Left colon (tissue), 2 donors: ENCODE measurements at regions of chr4 and their contacts with region 1.

Region 1: DNA sequence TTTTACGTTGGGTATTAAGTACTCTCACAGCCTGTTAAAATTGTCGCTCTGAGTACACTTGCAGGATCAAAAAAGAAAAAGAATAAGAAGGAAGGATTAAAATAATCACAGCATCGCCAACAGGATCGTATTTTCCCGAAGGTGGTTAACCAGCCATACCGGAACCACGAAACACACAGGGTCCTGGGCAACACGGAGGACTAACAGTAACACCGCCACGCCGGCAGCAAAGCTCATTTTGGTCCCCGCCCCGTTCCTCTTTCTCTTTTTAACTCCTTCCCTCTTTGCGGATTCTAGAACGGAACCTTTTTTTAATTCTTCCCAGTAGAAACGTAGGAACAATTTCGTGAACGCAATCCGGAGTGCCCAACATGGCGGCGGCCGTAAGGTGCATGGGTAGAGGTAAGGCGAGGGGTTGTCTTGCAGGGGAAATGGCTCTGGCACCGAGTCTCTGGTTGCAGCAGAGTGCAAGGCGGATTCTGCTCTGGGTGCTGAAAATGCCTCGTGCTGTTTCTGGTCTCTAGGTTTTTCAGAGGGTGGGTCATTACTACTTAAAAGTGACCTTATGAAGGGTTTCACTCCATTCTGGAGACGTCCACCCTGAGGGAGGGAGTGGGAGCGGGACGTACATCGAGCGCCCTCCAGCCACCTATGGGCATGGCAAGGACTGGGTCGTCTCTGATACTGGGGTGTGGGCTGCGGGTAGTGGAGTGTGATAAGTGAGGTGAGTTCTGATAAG is at the start of gene MRPL1:
- DNase-seq: peak; percentile 90
- ATAC-seq: peak; percentile 92
- total RNA-seq, gene MRPL1: 25.7 to 33.7 TPM

Region 2: DNA sequence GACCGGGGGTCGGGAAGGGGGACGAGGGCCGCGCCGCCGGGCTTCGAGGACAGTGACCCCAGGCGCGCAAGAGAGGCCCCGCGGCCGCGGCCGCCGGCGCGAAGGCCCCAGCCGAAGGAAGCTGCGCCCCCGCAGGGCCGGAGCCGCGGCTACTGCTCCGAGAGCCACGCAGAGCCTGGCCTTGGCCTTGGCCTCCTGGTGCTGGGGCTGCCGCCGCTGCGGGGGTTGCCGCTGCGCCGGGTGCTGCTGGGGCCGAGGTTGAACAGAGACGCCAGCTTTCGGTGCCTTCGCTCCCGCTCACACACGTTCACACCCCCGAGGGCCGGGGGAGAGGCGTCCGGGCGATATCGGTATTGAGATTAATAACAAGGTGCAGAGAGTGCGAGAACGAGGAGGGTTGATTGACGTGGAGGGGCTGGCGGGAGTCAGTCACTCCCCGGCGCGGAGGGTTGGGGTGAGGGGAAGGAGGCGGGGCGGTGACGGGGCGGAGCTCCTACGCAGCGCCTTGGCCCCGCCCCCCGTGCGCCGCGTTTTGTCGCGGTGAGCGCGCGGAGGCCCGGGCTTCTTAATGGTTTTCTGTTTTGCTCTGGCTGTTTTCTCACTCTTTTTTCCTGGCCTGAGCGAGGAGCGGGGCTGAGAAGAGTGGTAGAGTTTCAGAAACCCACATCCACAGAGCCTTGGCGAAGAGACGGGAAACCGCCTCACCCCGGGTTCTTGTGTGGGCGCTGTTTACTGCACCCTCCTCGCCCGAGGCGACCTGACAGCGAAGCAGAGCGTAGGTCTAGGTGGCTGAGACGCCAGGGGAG is 42.6 kb before region 1 on chr4:
- intact Hi-C with region 1: loop called in 1 of 2 experiments (anchors 5 kb)
- DNase-seq: peak; percentile 92 to 97
- ATAC-seq: peak; percentile 81

Region 3: GRCh38 chr4:78002261-78002660 is 139.6 kb after region 1 on chr4:
- intact Hi-C with region 1: no loop called
- DNase-seq: no peak
- ATAC-seq: no peak